HCT116 (cell line): ENCODE measurements at regions of chr17 and their contacts with region 1.

Region 1: GRCh38 chr17:79045842-79046196 is 21.9 kb downstream of the C1QTNF1 start:
- DNase-seq: peak; percentile 54
- ATAC-seq: peak; percentile 89
- H3K4me3 ChIP-seq: no peak overlapping the region
- H3K27ac ChIP-seq: no peak overlapping the region
- H3K4me1 ChIP-seq: peaks cover 0 to 13% of the 10 kb centered on the region in 2 experiments; a peak in 3 of 4 replicates
- H3K27me3 ChIP-seq: no peaks in the 10 kb centered on the region
- CTCF ChIP-seq: peak; percentile 93 to 99 (median 99)
- POLR2A ChIP-seq: no peak
- RAD21 ChIP-seq: peak; percentile 88

Region 2: DNA sequence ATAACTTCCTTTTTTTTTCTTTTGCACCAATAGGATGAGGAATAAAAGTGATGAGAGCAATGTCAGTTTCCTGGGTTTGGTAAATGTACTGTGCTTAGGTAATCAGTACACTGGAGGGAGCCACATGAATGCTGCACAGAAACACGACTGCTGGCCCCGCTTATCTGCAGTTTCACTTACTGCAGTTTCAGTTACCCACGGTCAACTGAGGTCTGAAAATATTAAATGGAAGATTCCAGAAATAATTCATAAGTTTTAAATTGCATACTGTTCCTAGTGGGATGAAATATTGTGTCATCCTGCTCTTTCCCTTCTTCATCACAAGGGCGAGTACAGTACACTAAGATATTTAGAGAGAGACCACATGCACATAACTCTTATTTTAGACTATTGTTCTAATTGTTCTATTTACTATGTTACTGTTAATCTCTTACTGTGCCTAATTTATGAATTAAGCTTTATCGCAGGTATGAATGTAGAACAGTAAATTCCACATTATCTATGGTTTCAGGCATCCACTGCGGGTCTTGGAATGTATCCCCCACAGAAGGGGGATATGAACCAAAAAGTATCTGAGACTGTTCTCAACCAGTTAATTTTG is 59.7 kb before region 1 on chr17:
- CTCF ChIA-PET with region 1: no interaction called
- POLR2A ChIA-PET with region 1: no interaction called
- RAD21 ChIA-PET with region 1: no interaction called
- intact Hi-C with region 1: no loop called
- DNase-seq: no peak
- ATAC-seq: peak; percentile 52
- H3K4me3 ChIP-seq: peak overlapping the region in 1 of 2 experiments; percentile 28; a peak in 3 of 4 replicates
- H3K27ac ChIP-seq: peak overlapping the region; percentile 34
- H3K4me1 ChIP-seq: peaks cover 15 to 28% of the 10 kb centered on the region in 2 experiments
- H3K27me3 ChIP-seq: no peaks in the 10 kb centered on the region
- CTCF ChIP-seq: peak in 1 of 3 experiments; percentile 32; a peak in 2 of 6 replicates
- POLR2A ChIP-seq: no peak
- RAD21 ChIP-seq: no peak; the same call in 1 of the 2 replicates

Region 3: DNA sequence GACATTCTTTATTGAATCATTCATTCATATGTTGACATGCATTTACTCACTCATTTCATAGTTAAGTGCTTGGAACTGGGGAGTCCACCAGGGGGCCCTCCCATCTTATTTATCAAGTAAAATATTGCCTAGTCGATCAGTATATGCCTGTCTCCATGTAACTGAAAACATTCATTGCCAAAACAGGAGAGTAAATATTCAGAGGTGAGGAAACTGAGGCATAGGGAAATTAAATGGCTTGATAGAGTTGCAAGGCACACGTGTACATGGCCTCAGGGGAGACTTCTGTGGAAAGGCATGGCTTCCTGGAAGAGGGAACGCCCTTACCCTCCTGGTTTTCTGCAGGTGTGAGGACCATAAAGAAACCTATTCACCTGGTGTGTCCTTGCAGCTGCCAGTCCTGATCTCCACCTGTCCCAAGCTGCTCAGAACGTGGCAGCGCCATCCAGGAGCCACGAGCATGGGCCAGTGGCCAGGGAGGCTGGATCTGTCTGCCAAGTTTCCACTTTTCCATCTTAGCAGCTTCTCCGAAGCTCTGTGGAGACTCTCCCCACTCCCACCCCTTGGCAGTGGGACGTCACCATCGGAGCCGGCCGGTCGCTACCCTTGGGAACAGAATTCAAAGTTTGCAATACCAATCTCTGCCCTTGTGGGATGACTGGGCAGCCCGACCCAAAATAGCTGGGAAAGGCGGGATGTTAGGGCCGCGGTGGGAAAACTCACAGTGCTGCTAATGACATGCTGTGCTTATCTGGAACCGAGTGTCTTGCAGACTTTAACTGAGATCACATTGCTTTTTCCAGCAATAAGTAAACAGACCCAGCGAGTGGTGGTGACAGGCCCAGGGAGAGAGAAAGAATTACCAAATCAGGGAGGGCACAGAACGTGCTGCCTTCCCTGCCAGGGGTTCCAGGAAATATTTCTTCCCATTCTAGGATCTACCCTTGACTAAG is 25.9 kb before region 1 on chr17:
- CTCF ChIA-PET with region 1: interaction called, 23 read pairs
- POLR2A ChIA-PET with region 1: no interaction called
- RAD21 ChIA-PET with region 1: interaction called in 1 of 2 experiments, 3 read pairs
- intact Hi-C with region 1: loop called (anchors 1 kb)
- DNase-seq: peak; percentile 76
- ATAC-seq: peak; percentile 72
- H3K4me3 ChIP-seq: no peak overlapping the region
- H3K27ac ChIP-seq: no peak overlapping the region
- H3K4me1 ChIP-seq: peaks cover 4 to 24% of the 10 kb centered on the region in 2 experiments
- H3K27me3 ChIP-seq: no peaks in the 10 kb centered on the region
- CTCF ChIP-seq: peak; percentile 89 to 99 (median 96)
- POLR2A ChIP-seq: no peak
- RAD21 ChIP-seq: peak; percentile 95

Region 4: DNA sequence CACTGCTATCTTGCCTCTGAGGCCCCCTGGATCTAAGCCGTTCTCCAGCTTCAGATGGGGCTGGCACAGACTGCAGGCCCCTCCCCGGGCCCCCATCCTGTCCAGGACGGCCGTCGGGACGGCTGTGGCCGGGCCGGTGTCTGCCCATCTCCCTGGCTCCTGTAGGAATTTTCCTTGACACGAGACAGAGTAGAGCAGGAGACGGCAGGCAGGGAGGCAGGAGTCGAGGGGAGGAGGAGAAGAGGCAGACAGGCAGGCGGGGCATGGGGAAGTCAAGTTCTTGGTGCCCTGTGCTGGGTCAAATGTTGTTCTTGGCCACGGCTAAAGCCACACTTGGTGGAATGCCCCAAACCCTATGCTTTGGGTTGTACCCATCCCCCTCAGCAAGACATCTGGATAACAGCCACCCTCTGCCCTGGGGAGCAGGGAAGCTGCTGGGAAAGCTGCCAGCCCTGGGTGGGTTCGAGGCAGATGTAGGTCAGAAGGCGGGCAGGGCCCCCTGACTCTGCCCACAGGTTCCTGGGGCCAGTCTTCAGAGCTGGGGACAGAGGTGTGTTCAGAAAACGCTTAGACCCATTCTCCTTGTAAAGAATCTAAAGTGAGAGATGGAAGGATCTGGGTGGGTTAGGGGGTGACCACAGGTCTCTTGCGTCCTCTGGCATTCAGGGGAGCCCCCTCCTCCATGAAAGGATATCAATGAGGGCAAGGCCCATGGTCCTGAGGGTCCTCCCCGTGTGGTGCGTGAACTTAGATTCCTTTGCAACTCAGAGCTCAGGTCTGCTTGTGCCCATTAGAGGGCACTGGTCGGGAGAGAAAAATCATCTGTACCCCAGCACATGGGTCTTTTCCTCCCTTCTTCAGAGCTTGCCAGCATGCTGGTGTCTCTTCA is 17.6 kb before region 1 on chr17:
- CTCF ChIA-PET with region 1: interaction called, 44 read pairs
- POLR2A ChIA-PET with region 1: interaction called, 3 read pairs
- RAD21 ChIA-PET with region 1: interaction called in 1 of 2 experiments, 4 read pairs
- intact Hi-C with region 1: loop called (anchors 2 kb)
- DNase-seq: no peak
- ATAC-seq: peak; percentile 26
- H3K4me3 ChIP-seq: peak overlapping the region in 1 of 2 experiments; percentile 56; a peak in 1 of 4 replicates
- H3K27ac ChIP-seq: peak overlapping the region; percentile 40; the same call in 1 of the 2 replicates
- H3K4me1 ChIP-seq: peaks cover 45 to 59% of the 10 kb centered on the region in 2 experiments
- H3K27me3 ChIP-seq: no peaks in the 10 kb centered on the region
- CTCF ChIP-seq: peak; percentile 48 to 61 (median 60); a peak in 5 of 6 replicates
- POLR2A ChIP-seq: no peak
- RAD21 ChIP-seq: no peak

Region 5: GRCh38 chr17:79065105-79065670 is 19.4 kb after region 1 on chr17:
- CTCF ChIA-PET with region 1: interaction called, 13 read pairs
- POLR2A ChIA-PET with region 1: interaction called, 3 read pairs
- RAD21 ChIA-PET with region 1: no interaction called
- intact Hi-C with region 1: no loop called
- DNase-seq: peak; percentile 52
- ATAC-seq: peak; percentile 78
- H3K4me3 ChIP-seq: no peak overlapping the region
- H3K27ac ChIP-seq: no peak overlapping the region
- H3K4me1 ChIP-seq: no peaks in the 10 kb centered on the region
- H3K27me3 ChIP-seq: no peaks in the 10 kb centered on the region
- CTCF ChIP-seq: peak; percentile 64 to 84 (median 76); a peak in 5 of 6 replicates
- POLR2A ChIP-seq: no peak
- RAD21 ChIP-seq: peak; percentile 70

Region 6: GRCh38 chr17:79074650-79075445 is 29.0 kb after region 1 on chr17 and contains the start of gene ENGASE:
- CTCF ChIA-PET with region 1: interaction called, 16 read pairs
- POLR2A ChIA-PET with region 1: no interaction called
- RAD21 ChIA-PET with region 1: interaction called in 1 of 2 experiments, 4 read pairs
- intact Hi-C with region 1: no loop called
- DNase-seq: peak; percentile 92
- ATAC-seq: peak; percentile 99
- H3K4me3 ChIP-seq: peak within 1 kb of the TSS; percentile 78 to 91
- H3K27ac ChIP-seq: peak within 1 kb of the TSS; percentile 67
- H3K4me1 ChIP-seq: peaks cover 10 to 22% of the 10 kb centered on the region in 2 experiments; a peak in 3 of 4 replicates
- H3K27me3 ChIP-seq: no peaks in the 10 kb centered on the region
- CTCF ChIP-seq: no peak
- POLR2A ChIP-seq: peak; percentile 38
- RAD21 ChIP-seq: no peak
- total RNA-seq, gene ENGASE: 54.2 TPM

Region 7: DNA sequence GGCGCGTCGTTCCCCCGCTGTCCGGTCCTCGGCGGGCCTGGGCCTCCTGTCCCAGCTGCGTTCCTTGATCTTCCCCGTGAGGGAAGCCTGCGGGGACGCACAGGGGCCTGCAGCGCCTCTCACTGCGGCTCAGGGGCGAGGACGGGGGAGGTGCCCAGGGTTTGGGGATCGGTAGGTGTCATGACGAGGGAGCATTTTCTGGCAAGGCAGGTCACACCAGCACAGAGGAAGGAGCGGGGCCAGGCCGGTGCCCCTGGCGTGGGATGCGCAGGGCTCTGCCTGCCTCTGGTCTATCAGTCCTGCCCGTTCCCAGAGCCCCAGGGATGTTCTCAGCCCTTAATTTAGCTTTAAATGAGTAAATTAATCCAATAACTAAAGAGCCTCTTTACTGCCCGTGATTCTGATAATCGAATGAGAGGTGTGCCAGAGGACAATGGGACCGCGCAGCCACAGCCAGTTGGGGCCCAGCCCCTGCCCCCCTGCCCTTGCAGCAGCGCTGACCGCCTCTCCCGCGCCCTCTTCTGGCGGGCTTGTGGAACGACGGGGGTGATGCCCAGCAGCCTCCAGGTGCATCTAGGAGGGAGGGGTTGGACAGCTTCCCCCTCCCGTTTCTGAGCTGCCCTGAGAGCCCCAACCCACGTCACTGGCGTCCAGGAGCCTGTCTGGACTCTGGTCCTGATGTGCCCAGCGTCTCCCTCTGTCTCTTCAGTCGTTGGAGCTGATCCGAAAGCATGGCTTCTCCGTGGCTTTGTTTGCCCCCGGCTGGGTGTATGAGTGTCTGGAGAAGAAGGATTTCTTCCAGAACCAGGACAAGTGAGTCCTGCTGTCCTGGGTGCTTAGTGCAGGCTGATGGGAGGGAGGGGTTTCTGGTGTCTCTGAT is 36.7 kb after region 1 on chr17:
- CTCF ChIA-PET with region 1: interaction called, 8 read pairs
- POLR2A ChIA-PET with region 1: no interaction called
- RAD21 ChIA-PET with region 1: interaction called in 1 of 2 experiments, 4 read pairs
- intact Hi-C with region 1: loop called (anchors 1 kb)
- DNase-seq: peak; percentile 22
- ATAC-seq: peak; percentile 85
- H3K4me3 ChIP-seq: no peak overlapping the region
- H3K27ac ChIP-seq: no peak overlapping the region
- H3K4me1 ChIP-seq: no peaks in the 10 kb centered on the region
- H3K27me3 ChIP-seq: no peaks in the 10 kb centered on the region
- CTCF ChIP-seq: peak; percentile 86 to 99 (median 98)
- POLR2A ChIP-seq: no peak
- RAD21 ChIP-seq: peak; percentile 72

Region 8: DNA sequence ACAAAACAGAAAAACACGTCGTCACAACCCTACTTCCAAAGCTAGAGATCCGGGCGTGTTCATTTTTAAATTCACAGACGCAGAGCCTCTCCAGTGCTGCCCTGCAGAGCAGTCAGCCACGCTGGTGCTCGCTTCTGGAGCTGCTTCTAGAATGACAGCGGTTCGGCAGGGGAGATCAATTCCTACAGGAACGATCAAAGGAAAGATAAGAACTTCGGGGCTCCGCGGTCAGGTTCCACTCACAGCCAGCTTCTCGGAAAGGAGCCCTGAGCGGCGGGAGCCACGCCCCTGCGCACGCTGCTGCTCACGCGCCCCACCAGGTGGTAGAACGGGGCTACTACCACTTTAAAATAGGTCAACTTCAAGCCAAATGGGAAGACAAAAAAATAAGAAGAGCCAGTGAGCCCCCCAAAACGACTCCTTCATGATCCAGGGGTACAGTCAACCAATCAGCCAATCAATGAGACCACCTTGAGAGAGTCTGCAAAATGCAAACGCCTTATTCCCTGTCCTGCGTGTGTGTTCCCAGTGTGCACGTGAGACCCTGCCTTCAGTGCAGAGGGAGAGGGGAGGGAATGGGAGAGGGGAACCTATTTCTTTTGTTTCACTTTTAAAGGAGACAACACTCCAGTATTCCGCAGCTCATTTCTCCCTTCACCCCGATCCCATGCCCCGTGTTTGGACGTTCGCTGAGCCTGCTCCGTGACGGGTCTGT is 355.3 kb after region 1 on chr17:
- CTCF ChIA-PET with region 1: interaction called, 10 read pairs
- POLR2A ChIA-PET with region 1: no interaction called
- RAD21 ChIA-PET with region 1: no interaction called
- intact Hi-C with region 1: no loop called
- DNase-seq: peak; percentile 44
- ATAC-seq: peak; percentile 93
- H3K4me3 ChIP-seq: peak overlapping the region; percentile 38 to 43
- H3K27ac ChIP-seq: no peak overlapping the region
- H3K4me1 ChIP-seq: peaks cover 4 to 10% of the 10 kb centered on the region in 2 experiments; a peak in 2 of 4 replicates
- H3K27me3 ChIP-seq: peaks cover 23% of the 10 kb centered on the region
- CTCF ChIP-seq: peak; percentile 75 to 97 (median 97)
- POLR2A ChIP-seq: no peak
- RAD21 ChIP-seq: peak; percentile 60